ENCODE measurements at regions of chr2 and their contacts with region 1.

Region 1: GRCh38 chr2:73071360-73072133 is at the start of gene SFXN5:
- DNase-seq: peak; percentile 96
- H3K4me3 Mint-ChIP-seq: peak within 1 kb of the TSS; percentile 87
- H3K27ac Mint-ChIP-seq: peak within 1 kb of the TSS; percentile 90
- H3K4me1 Mint-ChIP-seq: peaks cover 28% of the 10 kb centered on the region
- H3K27me3 Mint-ChIP-seq: peaks cover 20% of the 10 kb centered on the region
- total RNA-seq, gene SFXN5: 9.5 and 12.0 TPM in 2 replicates

Region 2: GRCh38 chr2:72825241-72826155 is 246.0 kb before region 1 on chr2 and contains the start of gene EXOC6B:
- intact Hi-C with region 1: loop called (anchors 2 kb)
- DNase-seq: peak; percentile 79
- H3K4me3 Mint-ChIP-seq: peak within 1 kb of the TSS; percentile 93
- H3K27ac Mint-ChIP-seq: peak within 1 kb of the TSS; percentile 69
- H3K4me1 Mint-ChIP-seq: peaks cover 43% of the 10 kb centered on the region
- H3K27me3 Mint-ChIP-seq: peaks cover 5% of the 10 kb centered on the region
- total RNA-seq, gene EXOC6B: 6.8 and 7.7 TPM in 2 replicates

Region 3: GRCh38 chr2:72993147-72993932 is 78.2 kb before region 1 on chr2:
- intact Hi-C with region 1: loop called (anchors 1 kb)
- DNase-seq: peak; percentile 19
- H3K4me3 Mint-ChIP-seq: no peak overlapping the region
- H3K27ac Mint-ChIP-seq: no peak overlapping the region
- H3K4me1 Mint-ChIP-seq: no peaks in the 10 kb centered on the region
- H3K27me3 Mint-ChIP-seq: no peaks in the 10 kb centered on the region

Region 4: DNA sequence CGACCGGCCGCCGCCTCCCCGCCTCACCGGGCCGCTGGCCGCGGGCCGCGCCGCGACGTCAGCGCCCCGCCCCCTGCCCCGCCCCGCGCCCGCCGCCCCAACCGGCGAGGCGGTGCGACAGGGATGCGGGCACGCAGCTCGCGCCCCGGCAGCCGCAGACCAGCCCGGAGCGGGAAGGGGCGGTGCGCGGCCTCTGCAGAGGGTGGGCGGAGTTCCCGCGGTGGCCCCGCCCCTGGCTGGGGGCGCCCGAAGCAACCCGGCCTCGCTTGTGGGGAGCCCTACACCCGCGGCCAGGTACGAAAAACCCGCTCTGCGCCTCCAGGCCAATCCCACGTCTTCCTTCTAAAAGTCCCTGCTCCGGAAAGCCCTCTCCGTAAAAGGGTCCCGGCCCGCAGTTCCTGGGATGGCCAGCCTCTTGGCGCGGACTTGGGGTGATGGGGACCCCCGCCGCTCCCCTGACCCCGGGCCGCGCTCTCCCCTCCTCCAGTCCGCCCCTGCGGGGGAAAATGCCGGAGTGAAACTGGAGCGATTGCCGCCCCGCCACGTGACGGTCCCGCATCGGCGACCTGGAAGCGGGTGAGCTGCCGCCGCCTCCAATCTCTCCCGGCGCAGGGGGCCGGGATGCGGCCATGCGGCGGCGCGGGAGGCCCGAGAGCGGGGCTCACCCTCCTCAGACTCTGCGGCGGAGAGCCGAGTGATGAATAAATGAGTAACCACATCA is 41.5 kb after region 1 on chr2 and contains the start of gene RAB11FIP5:
- intact Hi-C with region 1: loop called (anchors 1 kb)
- DNase-seq: peak; percentile 81
- H3K4me3 Mint-ChIP-seq: peak within 1 kb of the TSS; percentile 84
- H3K27ac Mint-ChIP-seq: peak within 1 kb of the TSS; percentile 46
- H3K4me1 Mint-ChIP-seq: peaks cover 25% of the 10 kb centered on the region
- H3K27me3 Mint-ChIP-seq: peaks cover 14% of the 10 kb centered on the region
- total RNA-seq, gene RAB11FIP5: 12.1 and 12.9 TPM in 2 replicates

Region 5: GRCh38 chr2:73176881-73177644 is 105.5 kb after region 1 on chr2:
- intact Hi-C with region 1: loop called (anchors 1 kb)
- DNase-seq: peak; percentile 77
- H3K4me3 Mint-ChIP-seq: peak overlapping the region; percentile 84
- H3K27ac Mint-ChIP-seq: peak overlapping the region; percentile 50
- H3K4me1 Mint-ChIP-seq: peaks cover 26% of the 10 kb centered on the region
- H3K27me3 Mint-ChIP-seq: peaks cover 50% of the 10 kb centered on the region

Region 6: GRCh38 chr2:73212448-73213176 is 141.1 kb after region 1 on chr2:
- intact Hi-C with region 1: loop called (anchors 1 kb)
- DNase-seq: peak; percentile 55
- H3K4me3 Mint-ChIP-seq: no peak overlapping the region
- H3K27ac Mint-ChIP-seq: no peak overlapping the region
- H3K4me1 Mint-ChIP-seq: peaks cover 31% of the 10 kb centered on the region
- H3K27me3 Mint-ChIP-seq: peaks cover 3% of the 10 kb centered on the region

Region 7: GRCh38 chr2:73293534-73294171 is 222.1 kb after region 1 on chr2 and contains the start of gene EGR4:
- intact Hi-C with region 1: loop called (anchors 2 kb)
- DNase-seq: peak; percentile 91
- H3K4me3 Mint-ChIP-seq: peak within 1 kb of the TSS; percentile 75
- H3K27ac Mint-ChIP-seq: peak within 1 kb of the TSS; percentile 63
- H3K4me1 Mint-ChIP-seq: peaks cover 14% of the 10 kb centered on the region
- H3K27me3 Mint-ChIP-seq: peaks cover 72% of the 10 kb centered on the region
- total RNA-seq, gene EGR4: 1.9 TPM in 2 replicates